WTC11 (cell line): ENCODE measurements at regions of chr15 and their contacts with region 1.

Region 1: GRCh38 chr15:76150971-76151598 is 91.3 kb downstream of the TMEM266 start:
- DNase-seq: peak; percentile 90
- ATAC-seq: peak; percentile 83
- H3K4me3 Mint-ChIP-seq: peak overlapping the region; percentile 24
- H3K27ac Mint-ChIP-seq: peak overlapping the region; percentile 79
- H3K4me1 Mint-ChIP-seq: peaks cover 47% of the 10 kb centered on the region
- H3K27me3 Mint-ChIP-seq: no peaks in the 10 kb centered on the region
- CTCF ChIP-seq: peak; percentile 92

Region 2: DNA sequence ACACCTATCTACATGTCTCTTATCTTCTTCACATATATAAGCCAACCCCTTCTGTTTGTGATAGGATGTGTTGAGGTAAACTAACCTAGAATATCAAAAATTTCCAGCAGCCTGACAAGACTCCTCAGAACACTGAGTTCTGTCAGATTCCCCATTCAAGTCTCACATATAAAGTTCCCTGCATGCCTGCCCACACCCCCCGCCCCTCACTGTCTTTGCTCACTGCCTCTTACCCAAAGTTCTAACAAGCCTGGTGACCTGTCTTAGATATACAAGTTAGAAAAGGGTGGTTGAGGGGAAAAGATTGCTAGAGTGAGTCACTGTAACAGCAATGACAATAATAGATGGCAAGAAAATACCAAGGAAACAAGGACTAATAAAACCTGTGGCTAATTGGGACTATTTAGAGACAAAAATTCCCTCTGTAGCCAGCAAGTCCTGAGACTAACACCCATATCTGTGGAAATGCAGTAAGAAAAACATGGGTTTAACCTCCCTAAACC is 207.3 kb before region 1 on chr15:
- CTCF ChIA-PET with region 1: no interaction called
- POLR2A ChIA-PET with region 1: no interaction called
- DNase-seq: no peak
- ATAC-seq: peak; percentile 56
- H3K4me3 Mint-ChIP-seq: no peak overlapping the region
- H3K27ac Mint-ChIP-seq: no peak overlapping the region
- H3K4me1 Mint-ChIP-seq: no peaks in the 10 kb centered on the region
- H3K27me3 Mint-ChIP-seq: no peaks in the 10 kb centered on the region; the same call in none of the 2 replicates
- CTCF ChIP-seq: no peak

Region 3: GRCh38 chr15:75994220-75994619 is 156.9 kb before region 1 on chr15:
- CTCF ChIA-PET with region 1: no interaction called
- POLR2A ChIA-PET with region 1: no interaction called
- DNase-seq: no peak
- ATAC-seq: peak; percentile 63
- H3K4me3 Mint-ChIP-seq: no peak overlapping the region
- H3K27ac Mint-ChIP-seq: no peak overlapping the region
- H3K4me1 Mint-ChIP-seq: peaks cover 21% of the 10 kb centered on the region
- H3K27me3 Mint-ChIP-seq: no peaks in the 10 kb centered on the region
- CTCF ChIP-seq: no peak

Region 4: GRCh38 chr15:76057332-76058000 is 93.6 kb before region 1 on chr15:
- CTCF ChIA-PET with region 1: interaction called, 63 read pairs
- POLR2A ChIA-PET with region 1: no interaction called
- DNase-seq: peak; percentile 26
- ATAC-seq: no peak
- H3K4me3 Mint-ChIP-seq: peak overlapping the region; percentile 35
- H3K27ac Mint-ChIP-seq: no peak overlapping the region
- H3K4me1 Mint-ChIP-seq: peaks cover 39% of the 10 kb centered on the region
- H3K27me3 Mint-ChIP-seq: peaks cover 16% of the 10 kb centered on the region
- CTCF ChIP-seq: peak; percentile 59

Region 5: DNA sequence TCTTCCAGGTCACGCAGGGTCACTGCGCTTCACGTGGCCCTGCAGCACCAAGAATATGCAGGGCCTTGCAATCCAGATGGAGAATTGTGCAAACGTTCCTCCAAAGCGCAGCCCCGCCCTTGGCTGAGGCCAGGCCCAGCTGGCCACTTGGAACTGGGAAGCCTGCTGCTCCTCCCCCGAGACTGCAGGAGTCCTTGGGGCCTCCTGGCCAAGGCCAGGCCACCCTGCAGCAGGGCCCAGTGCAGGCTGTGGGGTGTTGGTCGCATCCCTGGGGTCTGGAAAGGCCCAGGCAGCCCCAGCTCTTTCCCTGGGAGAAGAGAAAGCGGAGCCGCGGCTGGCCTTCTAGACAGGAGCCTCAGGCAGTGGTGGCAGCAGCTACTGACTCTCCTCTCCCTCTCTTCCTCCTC is 12.4 kb after region 1 on chr15:
- CTCF ChIA-PET with region 1: interaction called, 11 read pairs
- POLR2A ChIA-PET with region 1: no interaction called
- DNase-seq: no peak
- ATAC-seq: no peak; the same call in 1 of the 2 replicates
- H3K4me3 Mint-ChIP-seq: no peak overlapping the region
- H3K27ac Mint-ChIP-seq: no peak overlapping the region
- H3K4me1 Mint-ChIP-seq: peaks cover 12% of the 10 kb centered on the region; the same call in 1 of the 2 replicates
- H3K27me3 Mint-ChIP-seq: no peaks in the 10 kb centered on the region
- CTCF ChIP-seq: no peak